Ascending aorta (tissue), 2 donors: ENCODE measurements at regions of chr16 and their contacts with region 1.

Region 1: GRCh38 chr16:1705688-1706385 is at the start of gene MAPK8IP3:
- DNase-seq: peak; percentile 54 to 94
- H3K4me3 ChIP-seq: peak within 1 kb of the TSS; percentile 70 to 89
- H3K27ac ChIP-seq: peak within 1 kb of the TSS; percentile 85 to 95
- H3K4me1 ChIP-seq: peaks cover 0 to 22% of the 10 kb centered on the region in 2 donors
- H3K27me3 ChIP-seq: no peaks in the 10 kb centered on the region
- CTCF ChIP-seq: peak; percentile 64 to 100 (median 76)
- total RNA-seq, gene MAPK8IP3: 57.4 TPM

Region 2: DNA sequence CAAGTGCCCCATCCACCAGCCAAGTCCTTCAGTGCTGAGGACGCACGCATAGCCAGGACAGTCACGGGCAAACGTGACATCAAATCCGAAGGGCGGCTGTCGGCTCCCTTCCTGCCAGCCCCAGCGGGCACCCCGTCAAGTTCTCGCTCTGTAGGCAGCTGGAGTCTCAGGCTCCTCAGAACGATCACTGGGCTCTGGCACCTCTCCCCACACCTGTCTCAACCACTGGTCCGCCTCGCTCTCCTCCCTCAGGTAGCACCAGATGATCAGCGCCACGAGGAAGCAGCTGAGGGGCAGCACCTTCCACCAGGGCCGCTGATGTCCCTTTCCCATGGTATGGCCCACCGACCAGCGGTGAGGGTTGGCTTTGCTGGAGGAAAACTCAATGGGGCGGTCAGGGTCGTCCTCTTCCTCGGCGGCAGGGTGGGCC is 285.7 kb before region 1 on chr16:
- intact Hi-C with region 1: loop called (anchors 5 kb)
- DNase-seq: no peak
- H3K4me3 ChIP-seq: peak overlapping the region; percentile 65 to 70
- H3K27ac ChIP-seq: peak overlapping the region; percentile 93
- H3K4me1 ChIP-seq: peaks cover 7 to 16% of the 10 kb centered on the region in 2 donors
- H3K27me3 ChIP-seq: no peaks in the 10 kb centered on the region
- CTCF ChIP-seq: no peak

Region 3: DNA sequence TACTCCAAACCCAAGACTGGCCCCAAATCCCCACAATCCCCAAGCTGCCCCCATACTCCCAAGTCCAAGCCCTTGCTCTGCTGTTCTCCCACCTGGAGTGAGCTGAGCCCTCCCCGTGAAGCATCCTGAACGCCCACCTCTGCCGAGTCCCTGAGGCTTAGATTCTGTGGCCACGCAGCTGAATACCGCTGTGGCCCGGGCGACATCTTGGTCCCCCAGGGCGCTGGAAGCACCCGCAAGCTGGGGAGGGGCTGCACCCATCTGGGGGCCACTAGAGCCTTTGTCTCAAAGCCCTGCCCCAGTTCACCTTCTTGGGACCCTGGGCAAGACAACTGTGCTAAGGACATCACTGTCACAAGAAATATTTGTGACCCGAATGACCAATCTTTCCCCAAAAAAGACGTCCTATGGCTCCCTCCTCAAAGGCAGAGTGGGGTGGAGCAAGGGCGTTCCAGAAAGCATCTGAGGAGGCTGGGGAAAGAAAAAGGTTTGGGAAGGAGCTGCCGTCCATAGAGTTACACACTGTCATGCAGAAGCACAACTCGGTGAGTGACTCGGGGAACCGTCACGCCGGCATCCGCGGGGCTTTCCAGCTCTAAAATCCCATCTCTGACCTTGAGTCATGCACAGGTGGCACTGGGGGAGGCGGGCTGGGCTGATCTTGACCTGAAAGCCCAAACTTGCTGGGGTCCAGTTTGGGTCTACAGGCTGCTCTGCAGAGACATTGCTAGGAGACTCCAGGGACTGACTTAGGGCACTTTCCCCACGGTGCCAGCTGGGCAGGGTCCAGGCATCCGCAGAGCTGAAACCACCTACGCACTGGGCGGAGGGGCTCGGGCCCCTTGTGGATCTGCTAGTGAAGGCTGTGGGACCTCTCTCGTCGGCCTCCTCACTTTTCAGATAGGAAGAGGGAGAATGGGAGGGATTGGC is 223.7 kb before region 1 on chr16:
- intact Hi-C with region 1: no loop called
- DNase-seq: no peak
- H3K4me3 ChIP-seq: no peak overlapping the region
- H3K27ac ChIP-seq: no peak overlapping the region
- H3K4me1 ChIP-seq: no peaks in the 10 kb centered on the region
- H3K27me3 ChIP-seq: no peaks in the 10 kb centered on the region
- CTCF ChIP-seq: no peak

Region 4: DNA sequence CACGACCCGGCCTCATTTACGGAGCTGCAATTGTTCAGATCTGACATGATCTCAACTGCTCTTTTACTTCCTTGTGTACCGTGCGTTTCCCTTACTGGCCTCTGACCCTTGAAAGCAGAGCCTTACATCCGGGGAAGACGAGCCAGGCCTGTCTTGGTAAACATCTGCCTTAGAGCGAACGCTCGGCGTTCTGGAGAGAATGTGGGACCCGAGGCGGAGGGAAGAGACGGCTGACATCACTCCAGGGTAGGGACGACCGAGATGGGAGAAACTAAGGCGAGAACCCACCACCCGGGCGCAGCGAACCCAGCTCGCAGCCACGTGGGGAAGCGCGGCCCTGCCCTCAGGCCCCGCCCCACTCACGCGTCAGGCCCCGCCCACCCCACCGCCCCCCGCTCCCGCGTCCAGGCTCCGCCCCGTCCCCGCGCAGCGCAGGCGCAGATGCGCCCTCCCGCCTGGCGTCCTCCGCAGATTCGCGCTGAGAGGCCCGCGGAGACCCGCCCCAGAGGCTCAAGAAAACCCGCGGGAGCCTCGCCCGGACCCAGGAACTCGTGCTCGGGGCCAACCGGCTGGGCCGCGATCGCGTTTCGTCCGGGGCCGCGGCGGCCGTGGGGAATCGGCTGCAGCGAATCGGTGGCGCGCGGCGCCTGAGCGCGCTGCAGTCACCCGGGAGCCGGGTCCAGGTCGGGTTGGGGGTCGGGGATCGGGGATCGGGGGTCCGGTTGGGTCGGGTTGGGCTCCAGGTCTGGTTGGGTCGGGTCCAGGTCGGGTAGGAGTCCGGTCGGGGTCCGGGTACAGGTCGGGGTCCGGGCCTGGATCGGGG is 212.7 kb before region 1 on chr16 and contains the start of gene TELO2:
- intact Hi-C with region 1: loop called (anchors 2 kb)
- DNase-seq: peak in 1 of 2 donors; percentile 81
- H3K4me3 ChIP-seq: peak within 1 kb of the TSS; percentile 78 to 93
- H3K27ac ChIP-seq: peak within 1 kb of the TSS; percentile 76 to 93
- H3K4me1 ChIP-seq: peaks cover 3 to 9% of the 10 kb centered on the region in 2 donors
- H3K27me3 ChIP-seq: no peaks in the 10 kb centered on the region
- CTCF ChIP-seq: no peak
- total RNA-seq, gene TELO2: 110 TPM

Region 5: DNA sequence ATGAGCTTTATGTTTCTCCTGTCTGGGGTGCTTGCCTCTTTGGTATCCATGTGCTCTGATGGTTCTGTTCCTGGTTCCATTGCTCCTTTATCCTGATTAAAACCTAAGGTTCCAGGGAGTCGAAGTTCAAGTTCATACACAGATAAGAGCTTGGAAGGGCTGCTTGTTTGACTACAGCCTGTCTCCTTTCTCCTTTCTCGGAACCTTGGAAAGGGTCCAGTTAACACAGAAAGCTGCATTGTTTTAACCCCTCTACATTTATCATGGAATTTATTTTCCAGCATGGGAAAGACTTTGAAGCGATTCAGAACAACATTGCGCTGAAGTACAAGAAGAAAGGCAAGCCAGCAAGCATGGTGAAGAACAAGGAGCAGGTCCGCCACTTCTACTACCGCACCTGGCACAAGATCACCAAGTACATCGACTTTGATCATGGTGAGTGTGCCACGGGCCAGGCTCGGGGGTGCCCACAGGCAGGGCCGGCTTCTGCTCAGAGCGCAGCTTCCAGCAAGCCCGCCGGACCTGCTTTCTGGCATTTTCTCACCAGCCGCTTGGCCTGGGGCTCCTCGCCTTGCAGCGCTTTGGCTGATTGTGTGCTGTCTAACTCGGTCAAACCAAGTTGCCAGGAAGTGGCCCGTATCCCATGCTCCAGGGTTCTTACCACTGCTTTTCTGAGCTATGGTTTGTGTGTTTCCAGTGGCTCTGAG is 73.8 kb before region 1 on chr16:
- intact Hi-C with region 1: no loop called
- DNase-seq: no peak
- H3K4me3 ChIP-seq: no peak overlapping the region
- H3K27ac ChIP-seq: no peak overlapping the region
- H3K4me1 ChIP-seq: no peaks in the 10 kb centered on the region
- H3K27me3 ChIP-seq: no peaks in the 10 kb centered on the region
- CTCF ChIP-seq: no peak

Region 6: DNA sequence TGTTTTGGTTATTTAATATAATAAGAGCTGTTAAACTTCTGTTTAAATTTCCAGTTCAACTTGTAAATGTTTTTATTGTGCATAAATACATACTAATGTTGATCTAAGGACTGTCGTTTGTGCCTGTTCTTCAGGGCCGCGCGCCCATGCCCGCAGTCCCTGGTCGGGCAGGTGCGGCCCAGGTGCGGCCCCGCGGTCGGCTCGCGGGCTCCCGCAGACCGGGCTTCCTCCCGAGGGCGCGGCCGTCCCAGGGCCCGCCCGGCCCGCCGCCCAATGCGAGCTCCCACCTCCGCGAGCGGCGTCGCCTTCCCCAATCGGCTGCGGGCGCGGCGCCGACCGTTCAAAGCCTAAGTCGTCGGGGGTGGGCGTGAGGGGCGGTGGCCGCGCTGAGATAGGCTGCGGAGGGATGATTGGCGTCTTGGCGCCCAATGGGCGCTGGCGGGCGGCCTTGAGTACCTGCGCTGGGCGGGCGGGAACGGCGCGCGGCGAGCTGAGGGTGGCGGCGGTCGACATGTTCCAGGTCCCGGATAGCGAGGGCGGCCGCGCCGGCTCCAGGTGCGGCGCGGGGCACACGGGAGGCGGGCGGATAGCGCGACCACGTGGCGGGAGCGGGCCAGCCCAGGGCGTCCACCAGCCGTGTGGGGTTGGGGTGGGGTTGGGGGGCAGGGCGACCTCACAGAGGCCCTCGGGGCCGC is 27.9 kb before region 1 on chr16 and contains the start of gene JPT2:
- intact Hi-C with region 1: loop called (anchors 1 kb)
- DNase-seq: peak; percentile 85 to 97
- H3K4me3 ChIP-seq: peak within 1 kb of the TSS; percentile 70 to 90
- H3K27ac ChIP-seq: peak within 1 kb of the TSS; percentile 35 to 59
- H3K4me1 ChIP-seq: peaks cover 0 to 3% of the 10 kb centered on the region in 2 donors
- H3K27me3 ChIP-seq: no peaks in the 10 kb centered on the region
- CTCF ChIP-seq: no peak
- total RNA-seq, gene JPT2: 18.3 TPM

Region 7: GRCh38 chr16:1782352-1783091 is 76.7 kb after region 1 on chr16 and contains the starts of genes NUBP2 and SPSB3:
- intact Hi-C with region 1: loop called (anchors 1 kb)
- DNase-seq: peak; percentile 99 to 100
- H3K4me3 ChIP-seq: peak within 1 kb of the TSS; percentile 84 to 99
- H3K27ac ChIP-seq: peak within 1 kb of the TSS; percentile 77 to 83
- H3K4me1 ChIP-seq: peaks cover 11 to 26% of the 10 kb centered on the region in 2 donors
- H3K27me3 ChIP-seq: no peaks in the 10 kb centered on the region
- CTCF ChIP-seq: no peak
- total RNA-seq, gene NUBP2: 182 TPM
- total RNA-seq, gene SPSB3: 159 TPM

Region 8: GRCh38 chr16:1826691-1827575 is 121.1 kb after region 1 on chr16 and contains the starts of genes FAHD1 and HAGH:
- intact Hi-C with region 1: loop called (anchors 1 kb)
- DNase-seq: peak; percentile 73 to 94
- H3K4me3 ChIP-seq: peak within 1 kb of the TSS; percentile 72 to 81
- H3K27ac ChIP-seq: peak within 1 kb of the TSS; percentile 70 to 72
- H3K4me1 ChIP-seq: peaks cover 12 to 37% of the 10 kb centered on the region in 2 donors
- H3K27me3 ChIP-seq: no peaks in the 10 kb centered on the region
- CTCF ChIP-seq: no peak
- total RNA-seq, gene FAHD1: 233 TPM
- total RNA-seq, gene HAGH: 177 TPM